Heart right ventricle (tissue), 16 donors: ENCODE measurements at regions of chrX and their contacts with region 1.

Region 1: DNA sequence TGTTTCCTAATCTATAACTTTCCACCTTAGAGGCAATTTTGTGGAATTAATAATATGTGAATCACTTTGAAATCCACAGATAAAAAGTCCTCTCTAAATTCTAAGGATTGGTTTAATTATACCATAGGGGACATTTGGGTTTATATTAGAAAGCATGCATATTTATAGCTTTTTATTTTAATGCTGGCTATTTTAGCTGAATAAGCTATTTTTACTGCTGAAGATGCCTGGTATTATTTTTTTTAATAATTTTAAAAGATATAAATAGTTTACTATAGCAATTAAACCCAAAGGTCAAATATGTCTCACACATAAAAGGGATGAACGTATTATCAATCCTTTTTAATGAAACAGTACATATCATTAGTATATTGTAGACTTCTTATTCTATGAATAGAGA is 415.4 kb downstream of the MAGEB5 start:
- DNase-seq: no peak
- ATAC-seq: no peak
- H3K4me3 ChIP-seq: no peak overlapping the region
- H3K27ac ChIP-seq: no peak overlapping the region
- H3K4me1 ChIP-seq: no peaks in the 10 kb centered on the region
- H3K27me3 ChIP-seq: no peaks in the 10 kb centered on the region
- CTCF ChIP-seq: no peak

Region 2: DNA sequence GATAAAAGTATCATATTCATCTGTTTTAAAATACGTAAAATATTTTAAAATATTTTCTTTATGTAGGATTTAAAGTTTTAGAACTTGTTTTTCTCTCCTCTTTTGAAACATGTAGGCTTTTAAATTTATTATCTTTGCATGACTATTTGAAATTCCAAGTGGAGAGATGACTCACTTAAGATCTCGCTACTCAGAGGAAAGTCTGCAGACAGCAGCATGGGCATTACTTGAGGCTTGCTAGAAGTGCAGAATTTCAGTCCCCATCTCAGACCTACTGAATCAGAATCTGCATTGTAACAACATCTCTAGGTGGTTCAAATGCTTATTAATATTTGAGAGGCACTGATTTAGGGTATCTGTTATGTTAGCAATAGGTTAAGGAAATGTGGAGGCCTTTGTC is 1389.9 kb before region 1 on chrX:
- intact Hi-C with region 1: loop called in 1 of 10 experiments (anchors 5 kb)
- DNase-seq: no peak
- ATAC-seq: no peak
- H3K4me3 ChIP-seq: no peak overlapping the region
- H3K27ac ChIP-seq: no peak overlapping the region
- H3K4me1 ChIP-seq: no peaks in the 10 kb centered on the region
- H3K27me3 ChIP-seq: no peaks in the 10 kb centered on the region
- CTCF ChIP-seq: no peak